Activated B cell treated with CpG ODN at 0.5 μM for 24 hours (primary cell): ENCODE measurements at regions of chr5 and their contacts with region 1.

Region 1: GRCh38 chr5:125006011-125006685 is 259.7 kb upstream of the ZNF608 start:
- DNase-seq: no peak
- ATAC-seq: peak; percentile 67
- H3K4me3 Mint-ChIP-seq: peak overlapping the region; percentile 66
- H3K27ac Mint-ChIP-seq: peak overlapping the region; percentile 90
- H3K4me1 Mint-ChIP-seq: peaks cover 71% of the 10 kb centered on the region
- H3K27me3 Mint-ChIP-seq: no peaks in the 10 kb centered on the region
- CTCF ChIP-seq: no peak

Region 2: DNA sequence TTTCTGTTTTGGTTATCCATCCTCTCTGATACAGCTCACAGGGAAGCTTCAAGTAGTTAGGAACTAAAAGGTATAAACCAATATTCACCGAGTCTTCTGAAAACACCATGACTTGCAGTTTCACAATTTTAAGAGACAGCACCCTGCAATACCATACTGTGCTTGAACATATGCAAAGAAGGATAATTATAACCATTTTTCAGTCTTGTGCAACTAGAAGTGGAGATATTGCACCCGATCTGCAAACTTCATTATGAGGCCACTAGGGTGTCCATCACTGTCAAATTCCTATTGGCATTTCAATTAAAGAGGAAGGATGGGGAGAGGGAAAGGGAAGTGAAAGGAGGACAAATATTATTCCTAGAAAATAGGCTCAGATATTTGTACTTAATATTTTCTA is 1550.5 kb before region 1 on chr5:
- CTCF ChIA-PET with region 1: no interaction called
- POLR2A ChIA-PET with region 1: no interaction called
- intact Hi-C with region 1: no loop called
- DNase-seq: no peak
- ATAC-seq: no peak
- H3K4me3 Mint-ChIP-seq: no peak overlapping the region
- H3K27ac Mint-ChIP-seq: no peak overlapping the region
- H3K4me1 Mint-ChIP-seq: peaks cover 12% of the 10 kb centered on the region
- H3K27me3 Mint-ChIP-seq: peaks cover 2% of the 10 kb centered on the region
- CTCF ChIP-seq: no peak

Region 3: DNA sequence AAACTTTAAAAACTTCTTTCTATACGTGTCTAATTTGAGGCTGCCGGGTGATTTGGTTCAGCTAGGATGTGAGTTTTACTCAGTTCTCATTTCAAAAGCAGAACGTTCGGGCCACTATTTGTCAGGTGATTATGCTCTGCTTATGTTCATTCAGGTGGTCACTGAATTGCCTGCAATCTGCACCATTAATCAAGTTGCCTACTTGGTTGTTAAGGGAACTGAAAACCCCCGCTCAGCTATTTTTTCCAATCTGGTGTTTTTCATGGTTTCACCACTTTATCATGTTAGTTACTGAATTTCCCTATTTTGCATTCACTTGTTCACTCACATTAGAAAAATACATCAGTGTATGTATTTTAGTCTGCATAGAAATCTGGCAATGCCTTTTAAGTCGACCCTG is 971.2 kb before region 1 on chr5:
- CTCF ChIA-PET with region 1: no interaction called
- POLR2A ChIA-PET with region 1: no interaction called
- intact Hi-C with region 1: loop called (anchors 1 kb)
- DNase-seq: no peak
- ATAC-seq: peak; percentile 94
- H3K4me3 Mint-ChIP-seq: peak overlapping the region; percentile 48
- H3K27ac Mint-ChIP-seq: peak overlapping the region; percentile 92
- H3K4me1 Mint-ChIP-seq: peaks cover 52% of the 10 kb centered on the region
- H3K27me3 Mint-ChIP-seq: no peaks in the 10 kb centered on the region
- CTCF ChIP-seq: no peak

Region 4: GRCh38 chr5:124524552-124525232 is 481.5 kb before region 1 on chr5:
- CTCF ChIA-PET with region 1: no interaction called
- POLR2A ChIA-PET with region 1: no interaction called
- intact Hi-C with region 1: loop called (anchors 5 kb)
- DNase-seq: no peak
- ATAC-seq: peak; percentile 92
- H3K4me3 Mint-ChIP-seq: no peak overlapping the region
- H3K27ac Mint-ChIP-seq: peak overlapping the region; percentile 3
- H3K4me1 Mint-ChIP-seq: peaks cover 35% of the 10 kb centered on the region
- H3K27me3 Mint-ChIP-seq: peaks cover 9% of the 10 kb centered on the region
- CTCF ChIP-seq: no peak

Region 5: DNA sequence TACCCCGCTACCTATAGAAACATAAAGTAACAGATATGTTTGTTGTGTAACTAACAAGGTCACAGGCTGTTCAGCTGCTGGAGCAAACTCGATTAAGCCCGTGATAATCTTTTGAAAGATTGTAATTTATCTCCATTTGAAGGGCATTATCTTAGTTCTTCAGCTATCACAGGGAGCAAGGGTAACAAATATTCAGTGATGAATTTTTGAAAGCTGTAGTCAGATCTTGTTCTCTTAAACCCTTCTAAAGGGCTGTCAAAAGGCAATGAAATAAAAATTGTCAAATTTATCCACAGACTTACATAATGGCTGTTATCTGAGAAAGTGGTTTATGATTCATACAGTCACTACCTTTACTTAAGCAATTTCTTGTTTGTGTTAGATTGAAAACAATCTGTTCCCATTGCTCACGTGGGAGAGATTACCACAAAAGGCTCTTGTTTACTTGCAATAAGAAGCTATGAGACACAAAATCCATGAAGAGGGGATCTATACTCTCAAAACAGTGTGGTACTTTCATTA is 181.4 kb before region 1 on chr5:
- CTCF ChIA-PET with region 1: no interaction called
- POLR2A ChIA-PET with region 1: no interaction called
- intact Hi-C with region 1: loop called (anchors 1 kb)
- DNase-seq: no peak
- ATAC-seq: no peak
- H3K4me3 Mint-ChIP-seq: no peak overlapping the region
- H3K27ac Mint-ChIP-seq: peak overlapping the region; percentile 74
- H3K4me1 Mint-ChIP-seq: peaks cover 17% of the 10 kb centered on the region
- H3K27me3 Mint-ChIP-seq: no peaks in the 10 kb centered on the region
- CTCF ChIP-seq: no peak

Region 6: GRCh38 chr5:124920909-124921666 is 85.1 kb before region 1 on chr5:
- CTCF ChIA-PET with region 1: no interaction called
- POLR2A ChIA-PET with region 1: interaction called, 6 read pairs
- intact Hi-C with region 1: loop called (anchors 1 kb)
- DNase-seq: no peak
- ATAC-seq: peak; percentile 83
- H3K4me3 Mint-ChIP-seq: no peak overlapping the region
- H3K27ac Mint-ChIP-seq: no peak overlapping the region
- H3K4me1 Mint-ChIP-seq: peaks cover 10% of the 10 kb centered on the region
- H3K27me3 Mint-ChIP-seq: no peaks in the 10 kb centered on the region
- CTCF ChIP-seq: no peak

Region 7: DNA sequence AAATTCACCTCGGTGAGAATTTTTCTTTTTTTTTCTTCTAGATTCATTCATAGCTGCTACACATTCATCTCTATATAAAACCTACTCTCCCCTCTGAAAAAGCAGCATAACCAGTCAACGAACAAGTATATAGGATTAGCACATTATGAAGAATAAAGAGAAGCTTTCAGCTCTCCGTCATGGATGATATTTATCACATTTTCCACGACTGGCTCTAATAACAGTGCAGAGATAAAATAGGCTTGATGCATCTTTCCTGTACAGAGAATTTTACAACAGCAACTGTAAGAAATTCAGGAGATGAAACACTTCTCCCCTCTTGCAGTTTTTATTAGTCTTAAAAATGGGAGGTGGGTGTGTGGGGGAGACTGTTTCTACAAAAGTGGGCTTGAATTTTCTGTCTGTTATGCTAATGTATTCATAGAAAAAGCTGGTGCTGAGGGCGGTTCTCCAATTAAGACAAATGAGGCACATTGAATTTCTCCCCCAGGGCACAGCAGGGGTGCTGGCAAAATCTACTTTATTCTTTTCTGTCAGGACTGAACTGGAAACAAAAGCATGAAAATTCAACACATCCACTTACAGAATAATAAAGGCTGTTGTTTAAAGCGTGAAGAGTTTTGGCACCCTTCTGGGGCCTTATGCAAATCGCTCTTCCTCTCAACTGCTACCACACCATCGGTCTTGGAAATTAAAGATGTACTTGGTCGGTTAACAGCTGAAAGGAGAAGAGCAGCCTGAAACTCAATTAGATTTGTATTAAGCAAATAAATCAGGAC is 25.8 kb before region 1 on chr5:
- CTCF ChIA-PET with region 1: no interaction called
- POLR2A ChIA-PET with region 1: interaction called, 3 read pairs
- intact Hi-C with region 1: loop called (anchors 2 kb)
- DNase-seq: no peak
- ATAC-seq: peak; percentile 90
- H3K4me3 Mint-ChIP-seq: peak overlapping the region; percentile 59
- H3K27ac Mint-ChIP-seq: peak overlapping the region; percentile 62
- H3K4me1 Mint-ChIP-seq: peaks cover 60% of the 10 kb centered on the region
- H3K27me3 Mint-ChIP-seq: no peaks in the 10 kb centered on the region
- CTCF ChIP-seq: no peak

Region 8: GRCh38 chr5:125057912-125058826 is 52.0 kb after region 1 on chr5:
- CTCF ChIA-PET with region 1: no interaction called
- POLR2A ChIA-PET with region 1: no interaction called
- intact Hi-C with region 1: no loop called
- DNase-seq: no peak
- ATAC-seq: no peak
- H3K4me3 Mint-ChIP-seq: no peak overlapping the region
- H3K27ac Mint-ChIP-seq: no peak overlapping the region
- H3K4me1 Mint-ChIP-seq: peaks cover 14% of the 10 kb centered on the region
- H3K27me3 Mint-ChIP-seq: no peaks in the 10 kb centered on the region
- CTCF ChIP-seq: no peak

Region 9: GRCh38 chr5:125083981-125084380 is 77.8 kb after region 1 on chr5:
- CTCF ChIA-PET with region 1: no interaction called
- POLR2A ChIA-PET with region 1: no interaction called
- intact Hi-C with region 1: no loop called
- DNase-seq: no peak
- ATAC-seq: no peak
- H3K4me3 Mint-ChIP-seq: no peak overlapping the region
- H3K27ac Mint-ChIP-seq: no peak overlapping the region
- H3K4me1 Mint-ChIP-seq: no peaks in the 10 kb centered on the region
- H3K27me3 Mint-ChIP-seq: no peaks in the 10 kb centered on the region
- CTCF ChIP-seq: no peak